ENCODE measurements at regions of chr10 and their contacts with region 1.

Region 1: DNA sequence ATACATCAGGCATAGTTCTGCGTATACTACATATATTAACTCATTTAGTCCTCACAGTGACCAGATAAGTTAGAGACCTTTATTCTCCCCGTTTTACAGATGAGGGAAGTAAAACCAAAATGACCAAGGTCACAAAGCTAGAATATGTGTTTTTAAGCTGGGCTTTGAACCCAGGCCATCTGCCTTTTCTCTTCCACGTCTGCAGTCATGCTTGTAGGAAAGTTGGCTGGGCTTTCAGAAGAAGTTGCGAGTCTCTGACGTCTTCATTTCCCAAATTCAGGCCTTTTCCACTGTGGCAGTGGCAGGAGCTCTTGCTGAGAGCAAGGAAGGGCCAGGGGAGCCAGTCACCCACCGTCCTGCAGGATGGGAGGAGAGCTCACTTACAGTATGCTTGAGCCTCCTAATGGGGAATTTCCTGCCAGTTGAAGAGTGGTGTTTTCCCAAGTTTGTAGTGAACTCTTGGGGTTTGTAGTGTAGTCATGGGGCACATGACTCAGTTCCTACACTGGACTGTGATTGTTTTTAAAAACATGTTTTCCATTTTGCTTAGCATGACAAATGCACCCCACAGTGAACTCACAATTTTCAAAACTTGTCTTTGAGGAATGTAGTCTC is 34.2 kb downstream of the CYP17A1 start:
- DNase-seq: peak; percentile 91
- H3K4me3 ChIP-seq: no peak overlapping the region
- H3K27ac ChIP-seq: peak overlapping the region; percentile 70 to 90 (median 84)
- H3K4me1 ChIP-seq: peaks cover 0 to 65% (median 58%) of the 10 kb centered on the region in 4 donors
- H3K27me3 ChIP-seq: no peaks in the 10 kb centered on the region
- CTCF ChIP-seq: no peak
- EP300 ChIP-seq: peak in 3 of 4 donors; percentile 28 to 72 (median 65)
- POLR2A ChIP-seq: no peak

Region 2: GRCh38 chr10:102752934-102753664 is 49.9 kb before region 1 on chr10:
- intact Hi-C with region 1: loop called (anchors 2 kb)
- DNase-seq: peak; percentile 78
- H3K4me3 ChIP-seq: no peak overlapping the region
- H3K27ac ChIP-seq: peak overlapping the region; percentile 75 to 87 (median 86)
- H3K4me1 ChIP-seq: peaks cover 0 to 44% (median 34%) of the 10 kb centered on the region in 4 donors
- H3K27me3 ChIP-seq: no peaks in the 10 kb centered on the region
- CTCF ChIP-seq: peak in 3 of 4 experiments; percentile 46 to 71 (median 55)
- EP300 ChIP-seq: no peak
- POLR2A ChIP-seq: no peak

Region 3: GRCh38 chr10:102782673-102783551 is 20.1 kb before region 1 on chr10:
- intact Hi-C with region 1: loop called (anchors 2 kb)
- DNase-seq: peak; percentile 95
- H3K4me3 ChIP-seq: peak overlapping the region in 2 of 4 donors; percentile 10 to 17
- H3K27ac ChIP-seq: peak overlapping the region; percentile 84 to 99 (median 94)
- H3K4me1 ChIP-seq: peaks cover 0 to 92% (median 79%) of the 10 kb centered on the region in 4 donors
- H3K27me3 ChIP-seq: no peaks in the 10 kb centered on the region
- CTCF ChIP-seq: peak in 1 of 4 experiments; percentile 16
- EP300 ChIP-seq: peak in 2 of 4 donors; percentile 82 to 91
- POLR2A ChIP-seq: peak in 1 of 2 donors; percentile 13